MCF 10A (cell line): ENCODE measurements at regions of chr5 and their contacts with region 1.

Region 1: DNA sequence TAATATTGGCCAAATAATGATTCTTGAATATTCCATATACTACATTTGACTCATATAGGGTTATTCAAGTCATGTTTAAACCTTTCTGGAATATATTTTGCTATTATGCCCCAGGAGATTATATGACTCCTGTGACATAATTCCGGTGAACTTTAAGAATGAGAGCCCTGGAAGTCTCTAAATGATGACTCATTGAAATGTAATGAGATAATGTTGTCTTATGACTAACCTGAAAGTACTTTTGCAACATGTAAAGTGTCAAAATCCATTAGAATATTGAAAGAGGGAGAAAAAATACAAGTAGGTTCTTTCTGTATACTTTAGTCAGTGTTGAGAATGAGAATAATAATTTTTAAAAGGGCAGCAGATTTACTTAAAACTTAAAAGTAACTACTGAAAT is 830.4 kb downstream of the MAT2B start:
- DNase-seq: peak; percentile 88
- H3K4me3 Mint-ChIP-seq: peak overlapping the region; percentile 3
- H3K27ac Mint-ChIP-seq: peak overlapping the region; percentile 35
- H3K4me1 Mint-ChIP-seq: peaks cover 24% of the 10 kb centered on the region
- H3K27me3 Mint-ChIP-seq: no peaks in the 10 kb centered on the region
- CTCF ChIP-seq: no peak

Region 2: DNA sequence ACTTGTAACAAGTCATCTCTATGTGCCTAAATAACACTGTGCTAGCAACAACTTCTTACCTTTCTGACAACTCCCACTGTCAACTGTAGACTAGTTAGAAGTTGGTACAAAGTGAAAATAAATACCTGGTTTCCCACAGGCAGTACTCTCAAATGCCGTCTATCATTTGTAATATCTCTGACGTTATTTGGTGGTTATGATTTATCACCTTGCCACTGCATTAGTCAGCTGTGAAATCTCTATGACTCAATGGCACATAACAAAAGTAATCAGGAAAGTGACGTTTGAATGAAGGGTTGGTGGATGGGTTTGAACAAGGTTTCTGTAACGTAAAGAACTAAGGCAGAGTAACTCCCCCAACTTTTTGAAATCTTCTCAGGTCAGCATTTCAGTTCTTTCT is 238.1 kb before region 1 on chr5:
- CTCF ChIA-PET with region 1: no interaction called
- POLR2A ChIA-PET with region 1: interaction called, 3 read pairs
- intact Hi-C with region 1: loop called (anchors 5 kb)
- DNase-seq: peak; percentile 81
- H3K4me3 Mint-ChIP-seq: no peak overlapping the region
- H3K27ac Mint-ChIP-seq: peak overlapping the region; percentile 58
- H3K4me1 Mint-ChIP-seq: peaks cover 7% of the 10 kb centered on the region
- H3K27me3 Mint-ChIP-seq: no peaks in the 10 kb centered on the region
- CTCF ChIP-seq: no peak